Right ventricle myocardium superior (tissue), 1 donor: ENCODE measurements at regions of chr1 and their contacts with region 1.

Region 1: GRCh38 chr1:115266729-115267421 is 71.2 kb downstream of the NGF start:
- DNase-seq: peak; percentile 64
- ATAC-seq: peak; percentile 88

Region 2: DNA sequence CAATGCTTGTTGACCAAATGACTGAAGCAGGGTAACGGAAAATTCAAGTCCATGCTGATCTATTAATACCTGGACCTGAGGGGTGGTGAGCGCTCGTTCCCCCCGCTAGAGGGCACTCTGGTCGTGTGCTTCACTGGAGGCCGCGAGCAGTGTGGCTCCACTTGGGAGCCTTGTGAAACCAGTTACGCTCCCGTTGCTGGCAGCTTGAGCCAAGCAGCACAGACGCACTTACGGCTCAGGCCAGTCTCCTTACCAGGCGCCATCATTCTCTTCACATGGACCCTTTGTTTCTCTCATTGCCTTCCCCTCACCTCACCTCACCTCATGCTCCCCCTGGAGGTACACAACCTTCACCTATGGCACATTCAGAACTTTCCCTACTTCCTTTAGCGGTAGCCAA is 127.9 kb before region 1 on chr1:
- intact Hi-C with region 1: loop called (anchors 10 kb)
- DNase-seq: peak; percentile 93
- ATAC-seq: peak; percentile 93

Region 3: GRCh38 chr1:115440733-115441132 is 173.9 kb after region 1 on chr1:
- intact Hi-C with region 1: loop called (anchors 10 kb)
- DNase-seq: no peak
- ATAC-seq: no peak